ENCODE measurements at regions of chr17 and their contacts with region 1.

Region 1: GRCh38 chr17:32783602-32784001 is 93.3 kb downstream of the MYO1D start:
- DNase-seq: no peak
- H3K4me3 ChIP-seq: no peak overlapping the region
- H3K27ac ChIP-seq: no peak overlapping the region
- H3K4me1 ChIP-seq: no peaks in the 10 kb centered on the region
- H3K27me3 ChIP-seq: no peaks in the 10 kb centered on the region
- CTCF ChIP-seq: peak; percentile 69 to 86 (median 76)
- POLR2A ChIP-seq: no peak

Region 2: DNA sequence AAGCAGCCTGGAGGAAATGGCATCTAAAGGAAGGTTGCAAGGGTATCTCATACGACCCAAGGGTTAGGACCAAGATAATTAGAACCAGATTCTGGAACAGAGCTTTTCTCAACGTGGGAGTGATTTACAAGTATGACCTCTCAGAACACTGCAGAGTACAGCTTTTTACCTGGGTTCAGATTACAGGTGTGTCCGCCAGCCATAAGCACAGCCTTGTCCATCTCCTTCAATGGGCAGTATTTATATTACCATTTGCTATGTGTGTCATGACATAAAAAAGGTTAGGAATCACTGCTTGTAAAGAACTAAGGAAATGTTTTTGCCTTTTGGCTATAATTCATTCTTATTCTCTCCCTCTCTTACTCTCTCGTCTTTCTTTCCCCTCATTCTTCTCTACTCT is 56.6 kb after region 1 on chr17:
- intact Hi-C with region 1: no loop called
- DNase-seq: no peak
- H3K4me3 ChIP-seq: no peak overlapping the region
- H3K27ac ChIP-seq: no peak overlapping the region
- H3K4me1 ChIP-seq: peaks cover 0 to 21% (median 0%) of the 10 kb centered on the region in 3 donors
- H3K27me3 ChIP-seq: no peaks in the 10 kb centered on the region
- CTCF ChIP-seq: no peak
- POLR2A ChIP-seq: no peak

Region 3: GRCh38 chr17:32882734-32883133 is 99.1 kb after region 1 on chr17:
- intact Hi-C with region 1: loop called (anchors 5 kb)
- DNase-seq: no peak
- H3K4me3 ChIP-seq: no peak overlapping the region
- H3K27ac ChIP-seq: no peak overlapping the region
- H3K4me1 ChIP-seq: peaks cover 0 to 9% (median 6%) of the 10 kb centered on the region in 3 donors
- H3K27me3 ChIP-seq: no peaks in the 10 kb centered on the region
- CTCF ChIP-seq: no peak
- POLR2A ChIP-seq: no peak

Region 4: GRCh38 chr17:32997753-32998632 is 214.4 kb after region 1 on chr17:
- intact Hi-C with region 1: loop called (anchors 10 kb)
- DNase-seq: no peak
- H3K4me3 ChIP-seq: peak overlapping the region in 1 of 4 donors; percentile 24
- H3K27ac ChIP-seq: no peak overlapping the region
- H3K4me1 ChIP-seq: no peaks in the 10 kb centered on the region
- H3K27me3 ChIP-seq: peaks cover 0 to 23% (median 0%) of the 10 kb centered on the region in 4 donors
- CTCF ChIP-seq: peak; percentile 61 to 92 (median 75)
- POLR2A ChIP-seq: no peak